ENCODE measurements at regions of chr12 and their contacts with region 1.

Region 1: GRCh38 chr12:117836999-117837736 is 131.6 kb downstream of the KSR2 start:
- DNase-seq: peak; percentile 80
- H3K4me3 Mint-ChIP-seq: no peak overlapping the region
- H3K27ac Mint-ChIP-seq: no peak overlapping the region
- H3K4me1 Mint-ChIP-seq: peaks cover 7% of the 10 kb centered on the region
- H3K27me3 Mint-ChIP-seq: peaks cover 33% of the 10 kb centered on the region
- CTCF ChIP-seq: peak; percentile 93

Region 2: GRCh38 chr12:117236456-117237001 is 600.6 kb before region 1 on chr12:
- CTCF ChIA-PET with region 1: interaction called, 39 read pairs
- POLR2A ChIA-PET with region 1: no interaction called
- intact Hi-C with region 1: loop called (anchors 1 kb)
- DNase-seq: peak; percentile 75
- H3K4me3 Mint-ChIP-seq: no peak overlapping the region
- H3K27ac Mint-ChIP-seq: no peak overlapping the region
- H3K4me1 Mint-ChIP-seq: no peaks in the 10 kb centered on the region
- H3K27me3 Mint-ChIP-seq: no peaks in the 10 kb centered on the region
- CTCF ChIP-seq: peak; percentile 73

Region 3: DNA sequence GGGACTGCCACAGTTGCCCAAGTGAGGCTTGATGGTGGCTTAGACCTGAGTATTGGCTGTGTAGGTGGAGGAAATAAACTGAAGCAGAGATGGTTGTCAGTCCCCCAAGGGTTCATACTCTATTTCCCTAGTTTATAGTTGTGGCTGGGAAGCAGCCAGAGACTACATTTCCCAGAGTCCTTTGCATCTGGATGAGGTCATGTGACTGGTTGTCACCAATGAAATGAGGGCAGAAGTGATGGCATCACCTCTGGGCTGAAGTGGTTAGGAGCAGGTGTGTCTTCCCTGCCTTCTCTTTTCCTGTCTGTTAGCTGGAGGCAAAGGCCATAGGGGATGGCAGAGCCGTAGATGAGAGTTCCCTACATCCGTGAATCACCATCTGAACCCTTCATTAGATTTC is 459.4 kb before region 1 on chr12:
- CTCF ChIA-PET with region 1: interaction called, 262 read pairs
- POLR2A ChIA-PET with region 1: no interaction called
- intact Hi-C with region 1: no loop called
- DNase-seq: peak; percentile 30
- H3K4me3 Mint-ChIP-seq: no peak overlapping the region
- H3K27ac Mint-ChIP-seq: no peak overlapping the region
- H3K4me1 Mint-ChIP-seq: no peaks in the 10 kb centered on the region
- H3K27me3 Mint-ChIP-seq: no peaks in the 10 kb centered on the region
- CTCF ChIP-seq: no peak

Region 4: DNA sequence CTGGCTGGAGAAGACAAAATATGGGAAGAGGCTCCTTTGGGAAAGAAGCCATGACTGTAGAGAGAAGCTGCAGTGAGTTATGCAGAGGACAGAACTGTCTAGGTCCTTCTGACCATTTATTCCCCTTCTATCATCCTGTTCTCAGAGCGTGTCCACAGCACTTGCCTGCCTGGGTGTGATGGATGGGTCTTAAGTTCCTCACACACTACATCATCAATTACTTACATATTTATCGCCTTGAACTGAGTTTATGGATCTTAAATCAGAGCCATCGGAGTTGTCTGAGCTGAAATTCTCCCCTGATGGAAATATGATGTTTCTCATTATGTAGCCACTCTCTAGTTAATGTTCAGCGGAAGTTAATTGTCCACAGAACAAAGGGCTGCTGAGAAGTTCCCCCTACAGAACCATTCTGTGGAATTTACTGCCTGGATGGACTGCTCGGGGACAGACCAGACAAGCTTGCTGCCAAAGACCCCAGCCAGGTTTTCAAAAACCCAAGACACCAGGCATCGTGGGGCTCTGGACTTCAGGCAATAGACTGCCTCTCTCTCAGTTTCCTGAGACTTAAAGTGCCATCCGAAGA is 243.3 kb before region 1 on chr12:
- CTCF ChIA-PET with region 1: interaction called, 67 read pairs
- POLR2A ChIA-PET with region 1: no interaction called
- intact Hi-C with region 1: no loop called
- DNase-seq: no peak
- H3K4me3 Mint-ChIP-seq: no peak overlapping the region
- H3K27ac Mint-ChIP-seq: no peak overlapping the region
- H3K4me1 Mint-ChIP-seq: no peaks in the 10 kb centered on the region
- H3K27me3 Mint-ChIP-seq: peaks cover 25% of the 10 kb centered on the region
- CTCF ChIP-seq: no peak

Region 5: DNA sequence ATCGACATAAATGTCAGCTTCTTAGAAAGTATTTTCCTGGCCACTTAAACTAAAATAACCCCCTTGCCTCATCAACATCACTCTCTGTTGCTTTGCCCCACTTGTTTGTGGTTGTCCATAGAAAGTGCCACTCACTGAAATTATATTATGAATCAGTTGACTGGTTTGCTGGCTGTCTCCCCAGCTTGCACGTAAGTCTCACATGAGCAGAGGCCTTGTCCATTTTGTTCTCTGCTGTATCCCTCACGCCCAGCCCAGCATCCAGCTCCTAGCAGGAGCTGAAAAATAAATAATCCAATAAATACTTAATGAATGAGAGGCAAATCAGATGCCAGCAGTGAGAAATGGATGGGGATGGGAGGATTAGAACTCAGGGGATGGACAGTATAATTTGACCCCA is 27.7 kb before region 1 on chr12:
- CTCF ChIA-PET with region 1: interaction called, 12 read pairs
- POLR2A ChIA-PET with region 1: interaction called, 3 read pairs
- intact Hi-C with region 1: no loop called
- DNase-seq: no peak
- H3K4me3 Mint-ChIP-seq: no peak overlapping the region
- H3K27ac Mint-ChIP-seq: no peak overlapping the region
- H3K4me1 Mint-ChIP-seq: peaks cover 7% of the 10 kb centered on the region
- H3K27me3 Mint-ChIP-seq: no peaks in the 10 kb centered on the region
- CTCF ChIP-seq: no peak

Region 6: GRCh38 chr12:117857632-117858612 is 20.8 kb after region 1 on chr12:
- CTCF ChIA-PET with region 1: interaction called, 115 read pairs
- POLR2A ChIA-PET with region 1: no interaction called
- intact Hi-C with region 1: no loop called
- DNase-seq: peak; percentile 65
- H3K4me3 Mint-ChIP-seq: no peak overlapping the region
- H3K27ac Mint-ChIP-seq: no peak overlapping the region
- H3K4me1 Mint-ChIP-seq: no peaks in the 10 kb centered on the region
- H3K27me3 Mint-ChIP-seq: no peaks in the 10 kb centered on the region
- CTCF ChIP-seq: peak; percentile 38